GM12878 (cell line): ENCODE measurements at regions of chr19 and their contacts with region 1.

Region 1: GRCh38 chr19:38315657-38316476 is at the start of gene YIF1B:
- DNase-seq: peak; percentile 83
- ATAC-seq: peak; percentile 98
- H3K4me3 ChIP-seq: peak within 1 kb of the TSS; percentile 90
- H3K27ac ChIP-seq: peak within 1 kb of the TSS; percentile 80
- H3K4me1 ChIP-seq: peaks cover 3% of the 10 kb centered on the region; the same call in 1 of the 2 replicates
- H3K27me3 ChIP-seq: no peaks in the 10 kb centered on the region; a peak in 1 of 4 replicates
- CTCF ChIP-seq: no peak
- EP300 ChIP-seq: no peak
- POLR2A ChIP-seq: peak; percentile 64
- RAD21 ChIP-seq: no peak
- polyA plus RNA-seq, gene YIF1B: 1.3 to 11.6 TPM

Region 2: GRCh38 chr19:38245826-38246498 is 69.9 kb before region 1 on chr19:
- CTCF ChIA-PET with region 1: interaction called, 4 read pairs
- POLR2A ChIA-PET with region 1: no interaction called
- RAD21 ChIA-PET with region 1: no interaction called
- SMC1A ChIA-PET with region 1: no interaction called
- in situ Hi-C with region 1: no loop called
- intact Hi-C with region 1: loop called (anchors 5 kb)
- DNase-seq: no peak
- ATAC-seq: no peak
- H3K4me3 ChIP-seq: no peak overlapping the region
- H3K27ac ChIP-seq: no peak overlapping the region
- H3K4me1 ChIP-seq: no peaks in the 10 kb centered on the region
- H3K27me3 ChIP-seq: no peaks in the 10 kb centered on the region
- CTCF ChIP-seq: no peak
- EP300 ChIP-seq: no peak
- POLR2A ChIP-seq: no peak
- RAD21 ChIP-seq: no peak